AG04450 (cell line): ENCODE measurements at regions of chr12 and their contacts with region 1.

Region 1: GRCh38 chr12:54191550-54192022 is 2.8 kb upstream of the SMUG1 start:
- DNase-seq: peak; percentile 60
- H3K4me3 ChIP-seq: no peak overlapping the region
- H3K27ac ChIP-seq: no peak overlapping the region
- H3K27me3 ChIP-seq: peaks cover 13% of the 10 kb centered on the region
- CTCF ChIP-seq: peak; percentile 92

Region 2: DNA sequence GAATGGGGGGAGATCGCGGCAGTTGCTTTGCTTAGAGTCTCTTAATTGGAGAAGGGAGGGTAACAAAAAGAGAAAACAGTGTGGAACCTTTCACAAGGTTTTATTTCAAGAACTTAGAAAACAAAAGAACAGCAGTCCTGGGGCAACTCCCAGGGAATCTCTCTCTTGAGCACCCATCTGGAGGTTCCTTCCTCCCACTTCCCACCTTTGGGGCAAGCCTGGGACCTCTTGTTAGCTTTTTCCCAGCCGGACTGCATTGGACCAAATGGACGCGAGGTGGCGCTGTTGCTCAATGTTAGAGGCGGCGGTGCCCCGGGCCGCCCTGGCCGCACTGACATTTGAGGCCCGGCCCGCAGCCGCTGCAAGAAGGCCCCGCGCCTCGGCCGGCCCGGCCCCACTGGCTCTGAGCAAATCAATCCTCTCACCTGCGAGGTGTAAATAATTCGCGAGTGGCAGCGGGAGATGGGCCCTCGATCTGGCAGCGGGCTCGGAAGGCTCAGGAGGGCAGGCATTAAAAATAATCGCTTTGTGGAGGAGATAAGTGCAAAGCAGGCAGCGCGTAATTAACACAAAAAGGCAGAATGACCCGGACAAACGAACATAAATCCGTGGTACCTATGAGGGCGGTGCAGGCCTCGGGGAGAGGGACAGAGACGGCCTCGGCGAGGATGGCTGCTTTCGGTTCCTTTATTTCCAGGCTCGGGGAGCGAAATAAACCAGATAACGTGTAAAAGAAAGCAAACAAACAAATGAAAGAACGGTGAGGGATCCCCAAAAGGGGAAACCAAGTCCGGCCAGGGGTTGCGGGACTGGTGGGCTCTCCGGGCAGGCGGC is 185.5 kb before region 1 on chr12:
- CTCF ChIA-PET with region 1: interaction called, 163 read pairs
- POLR2A ChIA-PET with region 1: interaction called, 7 read pairs
- DNase-seq: peak; percentile 20
- H3K4me3 ChIP-seq: peak overlapping the region; percentile 25
- H3K27ac ChIP-seq: no peak overlapping the region
- H3K27me3 ChIP-seq: peaks cover 95% of the 10 kb centered on the region
- CTCF ChIP-seq: peak; percentile 86

Region 3: GRCh38 chr12:54229624-54230212 is 38.1 kb after region 1 on chr12:
- CTCF ChIA-PET with region 1: no interaction called
- POLR2A ChIA-PET with region 1: no interaction called
- DNase-seq: peak; percentile 92
- H3K4me3 ChIP-seq: no peak overlapping the region
- H3K27ac ChIP-seq: peak overlapping the region; percentile 82
- H3K27me3 ChIP-seq: no peaks in the 10 kb centered on the region
- CTCF ChIP-seq: no peak

Region 4: DNA sequence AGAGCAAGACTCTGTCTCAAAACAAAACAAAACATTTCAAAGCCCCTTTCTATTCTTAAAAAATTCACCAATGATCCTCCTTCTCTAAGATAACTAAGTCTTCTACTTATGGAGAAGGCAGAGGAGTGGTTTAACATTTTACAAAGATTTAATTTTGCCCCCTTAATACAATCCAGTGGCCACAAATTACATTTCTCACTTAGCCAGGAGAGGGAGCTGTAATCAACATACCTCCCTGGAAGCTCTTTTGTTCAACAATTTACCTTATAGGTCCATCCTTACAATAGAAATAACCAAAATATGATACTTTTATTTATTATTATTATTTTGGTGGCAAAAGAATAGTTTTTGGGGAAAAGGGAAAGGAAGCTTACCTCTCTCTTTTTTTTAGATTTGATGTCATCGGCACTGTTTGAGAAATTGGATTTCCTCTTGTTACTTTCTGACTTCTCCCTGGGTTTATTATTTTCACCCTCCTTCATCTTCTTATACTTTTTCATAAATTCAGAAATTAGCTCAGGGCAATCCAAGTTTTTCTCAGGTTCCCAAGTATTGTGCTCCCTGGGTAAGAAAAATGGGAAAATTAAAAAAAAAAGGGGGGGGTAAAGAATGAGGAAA is 60.2 kb after region 1 on chr12:
- CTCF ChIA-PET with region 1: no interaction called
- POLR2A ChIA-PET with region 1: no interaction called
- DNase-seq: no peak
- H3K4me3 ChIP-seq: no peak overlapping the region
- H3K27ac ChIP-seq: no peak overlapping the region
- H3K27me3 ChIP-seq: no peaks in the 10 kb centered on the region
- CTCF ChIP-seq: peak; percentile 76